ENCODE measurements at regions of chr11 and their contacts with region 1.

Region 1: GRCh38 chr11:67401495-67402191 is at the start of gene PPP1CA:
- DNase-seq: peak; percentile 96
- ATAC-seq: peak; percentile 93
- H3K4me3 ChIP-seq: peak within 1 kb of the TSS; percentile 98
- H3K27ac ChIP-seq: peak within 1 kb of the TSS; percentile 93
- H3K4me1 ChIP-seq: peaks cover 44% of the 10 kb centered on the region
- H3K27me3 ChIP-seq: no peaks in the 10 kb centered on the region
- CTCF ChIP-seq: peak; percentile 23
- total RNA-seq, gene PPP1CA: 134 TPM

Region 2: GRCh38 chr11:67507864-67508485 is 106.3 kb after region 1 on chr11 and contains the start of gene CDK2AP2:
- intact Hi-C with region 1: loop called (anchors 10 kb)
- DNase-seq: peak; percentile 100
- ATAC-seq: peak; percentile 88
- H3K4me3 ChIP-seq: peak within 1 kb of the TSS; percentile 87
- H3K27ac ChIP-seq: peak within 1 kb of the TSS; percentile 98
- H3K4me1 ChIP-seq: peaks cover 35% of the 10 kb centered on the region
- H3K27me3 ChIP-seq: no peaks in the 10 kb centered on the region
- CTCF ChIP-seq: no peak
- total RNA-seq, gene CDK2AP2: 84.2 TPM

Measured in upper lobe of right lung (tissue), 1 donor.